GM13976 (cell line): ENCODE measurements at regions of chr3 and their contacts with region 1.

Region 1: GRCh38 chr3:40191850-40192448 is 117.6 kb upstream of the EIF1B start:
- DNase-seq: peak; percentile 71
- CTCF ChIP-seq: peak; percentile 75

Region 2: GRCh38 chr3:39605837-39606236 is 586.1 kb before region 1 on chr3:
- in situ Hi-C with region 1: no loop called
- DNase-seq: no peak
- CTCF ChIP-seq: no peak

Region 3: DNA sequence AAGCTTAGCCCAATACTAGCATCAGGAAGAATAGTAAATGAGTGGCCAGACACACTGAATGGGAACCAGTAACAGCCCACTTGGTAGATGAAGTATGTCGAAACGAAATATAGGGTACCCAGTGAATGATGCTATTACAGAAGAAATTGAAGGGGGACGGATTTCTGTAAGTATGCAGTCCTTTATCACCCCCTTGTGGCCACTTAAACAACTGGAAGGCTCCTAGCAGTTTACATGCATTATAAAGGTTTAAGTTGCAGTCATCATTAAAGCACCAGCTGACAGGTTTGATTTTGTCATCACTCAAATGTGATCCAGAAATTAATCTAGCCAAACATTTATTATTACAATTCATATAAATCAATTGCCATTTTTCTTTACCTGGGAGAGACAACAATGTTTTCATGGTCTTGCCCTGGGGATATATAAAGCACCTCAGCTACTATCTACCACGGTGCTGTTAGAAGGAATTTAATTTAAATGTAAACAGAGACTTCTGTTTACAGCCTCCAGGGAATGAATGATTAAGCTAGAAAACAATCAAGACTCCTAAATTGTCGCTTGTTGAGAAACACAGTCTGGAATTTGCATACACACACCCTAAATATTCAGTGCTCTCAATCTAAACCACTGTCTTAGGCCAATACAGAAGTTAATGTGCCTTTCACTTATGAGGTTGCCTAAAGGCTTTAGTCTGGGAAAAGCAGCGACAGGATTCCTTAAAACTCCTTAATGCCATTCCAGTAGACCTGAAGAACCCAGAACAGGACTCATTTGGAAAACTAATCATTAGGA is 125.3 kb after region 1 on chr3:
- in situ Hi-C with region 1: loop called (anchors 5 kb)
- DNase-seq: peak; percentile 47
- CTCF ChIP-seq: peak; percentile 50